ENCODE measurements at regions of chr1 and their contacts with region 1.

Region 1: DNA sequence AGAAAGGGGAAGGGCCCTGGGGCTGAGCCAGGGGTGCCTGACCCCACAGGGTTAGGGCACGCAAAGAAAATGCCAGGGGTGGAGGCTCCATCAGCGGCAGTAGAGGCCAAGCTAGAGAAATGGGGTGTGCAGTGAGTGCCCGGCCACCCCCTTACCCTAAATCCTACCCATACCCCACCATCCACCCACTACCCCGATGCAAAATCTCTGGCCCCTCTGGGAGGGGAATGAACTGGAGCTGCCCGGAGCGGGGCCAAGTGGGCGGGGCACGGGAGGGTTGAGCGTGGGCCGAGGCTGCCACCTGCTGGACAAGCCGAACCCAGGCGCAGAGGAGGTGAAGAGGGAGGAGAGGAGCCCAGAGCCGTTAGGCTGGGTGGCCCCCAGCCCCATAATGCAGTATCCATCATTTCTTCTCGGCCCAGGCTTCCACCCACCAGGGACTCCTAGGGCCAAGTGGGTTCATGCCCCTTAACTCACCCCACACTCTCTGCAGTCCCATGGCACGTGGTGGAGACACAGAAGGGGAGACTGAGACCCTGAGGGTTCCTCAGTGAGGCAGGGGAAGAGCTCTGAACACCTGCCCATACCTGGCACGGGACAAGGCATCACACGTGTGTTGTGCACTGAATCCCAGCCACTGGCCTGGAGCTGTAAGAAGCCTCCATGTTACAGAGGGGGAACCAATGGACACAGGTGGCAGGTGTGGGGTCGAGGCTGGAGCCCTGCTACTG is 1.4 kb upstream of the C1QC start:
- DNase-seq: peak; percentile 76
- H3K4me3 ChIP-seq: no peak overlapping the region
- H3K27ac ChIP-seq: no peak overlapping the region
- H3K4me1 ChIP-seq: no peaks in the 10 kb centered on the region
- H3K27me3 ChIP-seq: no peaks in the 10 kb centered on the region
- CTCF ChIP-seq: peak; percentile 90

Region 2: DNA sequence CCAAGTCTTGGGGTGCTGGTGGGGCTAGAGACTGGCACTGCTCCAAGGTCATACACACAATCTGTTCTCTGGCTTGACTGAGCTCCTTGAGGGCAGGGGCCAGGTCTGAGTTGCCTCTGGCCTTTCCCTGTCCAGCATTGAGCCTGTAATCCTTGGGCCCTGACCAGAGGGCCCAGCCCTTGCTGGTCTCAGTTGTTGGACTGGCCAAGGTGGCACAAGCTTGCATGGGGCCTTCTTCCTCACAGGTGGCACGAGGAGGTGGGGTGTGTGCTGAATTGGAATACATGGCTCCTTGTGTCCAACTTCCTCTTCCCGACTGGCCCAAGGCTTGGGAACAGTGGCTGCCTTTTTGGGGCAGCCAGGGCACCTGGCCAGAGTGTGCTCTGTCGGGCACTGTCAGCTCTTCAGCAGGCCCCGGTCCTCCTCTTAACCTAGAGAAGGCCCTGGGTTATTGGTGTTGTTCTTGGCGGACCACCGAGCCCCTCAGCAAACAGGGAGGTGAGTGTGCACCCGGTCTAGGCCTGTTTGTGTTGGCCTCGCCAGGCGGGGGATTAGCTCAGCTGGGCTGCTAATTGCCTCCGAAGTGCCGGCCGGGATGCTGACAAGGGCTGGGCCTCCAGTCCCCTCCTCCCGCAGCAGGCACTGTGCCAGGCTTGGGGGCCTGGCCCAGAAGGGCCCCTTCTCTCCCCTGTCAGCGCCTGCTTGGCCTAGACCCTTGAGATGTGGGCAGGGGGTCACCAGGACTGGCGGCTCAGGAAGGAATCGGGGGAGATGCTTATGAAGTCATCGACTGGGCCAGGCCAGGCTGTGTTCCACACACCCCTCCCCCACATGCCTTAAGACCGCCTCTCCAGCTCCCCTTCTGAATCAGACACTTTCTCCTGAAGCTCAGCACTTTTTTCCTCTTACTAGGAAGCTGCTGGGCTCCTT is 527.7 kb before region 1 on chr1:
- CTCF ChIA-PET with region 1: no interaction called
- POLR2A ChIA-PET with region 1: no interaction called
- intact Hi-C with region 1: loop called (anchors 10 kb)
- DNase-seq: peak; percentile 35
- H3K4me3 ChIP-seq: no peak overlapping the region
- H3K27ac ChIP-seq: peak overlapping the region; percentile 47
- H3K4me1 ChIP-seq: peaks cover 10% of the 10 kb centered on the region
- H3K27me3 ChIP-seq: no peaks in the 10 kb centered on the region
- CTCF ChIP-seq: no peak

Region 3: DNA sequence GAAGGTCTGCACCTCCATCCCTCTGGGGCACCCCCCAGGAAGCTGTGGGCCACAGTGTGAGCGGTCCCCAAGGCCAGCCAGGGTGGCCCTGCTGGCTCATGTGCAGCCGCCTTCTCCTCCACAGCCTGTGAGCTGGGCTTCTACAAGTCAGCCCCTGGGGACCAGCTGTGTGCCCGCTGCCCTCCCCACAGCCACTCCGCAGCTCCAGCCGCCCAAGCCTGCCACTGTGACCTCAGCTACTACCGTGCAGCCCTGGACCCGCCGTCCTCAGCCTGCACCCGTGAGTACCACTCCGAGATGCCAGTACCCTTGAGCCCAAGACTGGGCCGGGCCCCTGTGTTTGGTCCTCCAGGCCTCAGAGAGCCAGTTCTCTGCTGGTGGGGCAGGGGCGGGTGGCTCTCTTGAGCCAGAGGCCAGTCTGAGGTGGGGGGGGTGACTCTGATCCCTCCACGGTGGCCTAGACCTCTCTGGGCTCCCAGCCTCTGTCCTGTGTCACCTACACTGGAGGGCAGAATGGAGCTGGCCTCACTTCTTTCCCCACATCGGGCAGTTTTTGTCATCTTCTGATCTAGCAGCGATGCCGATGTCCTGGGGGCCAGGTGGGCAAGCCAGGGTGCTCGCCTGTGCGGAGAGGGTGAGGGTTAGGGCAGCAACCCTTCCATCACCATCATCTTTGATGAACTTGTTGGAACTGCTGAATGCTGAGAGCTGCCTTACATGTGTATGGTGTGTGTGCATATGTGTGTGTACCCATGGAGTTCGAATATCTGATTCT is 55.5 kb before region 1 on chr1:
- CTCF ChIA-PET with region 1: interaction called, 17 read pairs
- POLR2A ChIA-PET with region 1: no interaction called
- intact Hi-C with region 1: no loop called
- DNase-seq: no peak
- H3K4me3 ChIP-seq: no peak overlapping the region
- H3K27ac ChIP-seq: no peak overlapping the region
- H3K4me1 ChIP-seq: no peaks in the 10 kb centered on the region
- H3K27me3 ChIP-seq: peaks cover 10% of the 10 kb centered on the region
- CTCF ChIP-seq: no peak

Region 4: DNA sequence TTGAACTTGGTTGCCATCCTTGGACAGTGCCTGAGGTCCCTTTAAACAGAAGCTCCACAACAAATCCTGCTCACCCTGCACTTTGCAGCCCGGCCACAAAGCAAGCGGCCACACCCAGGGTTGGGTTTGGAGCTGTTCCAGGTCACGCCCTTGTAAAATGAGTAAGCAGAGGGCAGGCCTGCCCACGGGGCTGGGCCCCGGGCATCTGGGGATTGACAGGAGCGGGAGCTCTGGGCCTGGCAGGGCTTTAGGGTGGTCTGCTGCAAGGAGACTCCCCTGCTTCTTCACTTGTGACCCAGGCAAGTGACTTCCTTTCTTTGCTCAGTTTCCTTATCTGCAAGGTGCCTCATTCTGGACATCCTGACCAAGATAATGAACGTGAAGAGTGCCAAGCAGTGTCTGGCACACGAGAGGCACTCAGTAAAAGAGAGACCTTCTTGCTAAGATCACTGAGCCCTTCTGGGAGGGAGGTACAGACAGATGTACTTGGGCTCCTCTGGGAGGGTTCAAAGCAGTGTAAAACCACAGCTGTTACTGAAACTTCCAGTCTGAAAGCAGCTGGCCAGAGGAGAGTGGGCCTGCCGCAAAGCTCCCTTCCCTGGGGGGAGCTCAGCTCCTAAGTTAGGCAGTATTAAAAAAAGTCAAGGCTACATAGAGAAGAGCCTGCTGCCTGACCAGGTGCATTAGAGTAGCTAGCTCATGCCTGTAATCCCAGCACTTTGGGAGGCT is 886.3 kb after region 1 on chr1:
- CTCF ChIA-PET with region 1: no interaction called
- POLR2A ChIA-PET with region 1: interaction called, 11 read pairs
- intact Hi-C with region 1: no loop called
- DNase-seq: peak; percentile 87
- H3K4me3 ChIP-seq: peak overlapping the region; percentile 84
- H3K27ac ChIP-seq: peak overlapping the region; percentile 93
- H3K4me1 ChIP-seq: peaks cover 50% of the 10 kb centered on the region
- H3K27me3 ChIP-seq: no peaks in the 10 kb centered on the region
- CTCF ChIP-seq: no peak